Posterior vena cava (tissue), 2 donors: ENCODE measurements at regions of chr2 and their contacts with region 1.

Region 1: DNA sequence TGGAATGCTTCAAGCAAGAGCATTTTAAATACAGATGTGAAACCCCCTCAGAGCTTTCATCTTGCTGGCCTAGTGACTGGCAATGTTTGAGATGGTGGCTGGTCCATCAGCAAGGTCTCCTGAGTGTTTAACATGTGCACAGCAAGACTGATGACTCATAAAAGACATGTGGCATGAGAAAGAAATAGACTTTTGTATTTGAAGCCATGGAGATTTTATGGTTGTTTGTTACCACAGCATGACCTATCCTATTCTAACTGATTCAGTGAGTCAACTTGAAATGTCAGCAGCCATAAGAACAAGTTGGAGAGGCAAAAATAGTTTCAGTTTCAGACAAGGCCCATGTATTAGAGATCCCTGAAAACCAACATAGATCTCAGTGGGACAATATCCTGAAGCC is 154.7 kb upstream of the LYPD1 start:
- DNase-seq: no peak

Region 2: GRCh38 chr2:133787207-133787606 is 962.5 kb after region 1 on chr2:
- intact Hi-C with region 1: loop called in 1 of 2 experiments (anchors 5 kb)
- DNase-seq: no peak